ENCODE measurements at regions of chr19 and their contacts with region 1.

Region 1: GRCh38 chr19:2475702-2476450 is at the start of gene GADD45B:
- H3K4me3 ChIP-seq: peak within 1 kb of the TSS; percentile 95
- H3K27ac ChIP-seq: peak within 1 kb of the TSS; percentile 68
- H3K4me1 ChIP-seq: peaks cover 15% of the 10 kb centered on the region
- CTCF ChIP-seq: no peak

Region 2: DNA sequence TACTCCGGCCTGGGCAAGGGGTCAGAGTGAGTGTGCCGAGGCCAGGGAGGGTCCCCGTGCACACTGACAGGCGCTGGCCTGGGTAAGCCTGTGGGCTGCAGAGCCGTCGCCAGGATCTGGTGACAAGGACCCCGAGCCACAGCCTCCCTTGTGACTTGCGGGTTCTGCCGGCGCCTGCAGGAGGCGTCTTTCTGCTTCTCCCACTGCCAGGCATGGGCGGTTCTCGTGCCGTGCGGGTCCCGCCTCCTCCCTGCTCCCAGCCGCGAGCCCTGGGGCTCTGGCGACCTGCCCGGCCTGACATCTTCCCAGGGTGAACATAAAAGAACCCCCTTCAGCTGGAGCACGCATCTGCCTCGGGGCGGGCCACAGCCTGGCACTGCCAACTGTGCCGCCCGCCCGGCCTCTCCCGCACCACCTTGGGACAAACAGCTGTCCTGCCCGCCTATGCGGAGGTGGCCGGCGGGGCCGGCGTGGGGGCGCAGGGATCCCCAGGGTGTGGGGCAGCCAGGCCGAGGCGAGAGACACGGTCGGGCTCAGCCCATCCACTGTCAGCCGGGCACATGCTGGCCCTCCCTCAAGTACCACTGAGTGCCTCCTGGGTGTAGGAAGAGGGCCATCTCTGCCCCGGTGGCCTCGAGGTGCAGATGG is 1887.7 kb before region 1 on chr19:
- CTCF ChIA-PET with region 1: no interaction called
- POLR2A ChIA-PET with region 1: no interaction called
- H3K4me3 ChIP-seq: no peak overlapping the region
- H3K27ac ChIP-seq: peak overlapping the region; percentile 35; the same call in 1 of the 2 replicates
- H3K4me1 ChIP-seq: peaks cover 7% of the 10 kb centered on the region; the same call in 1 of the 2 replicates
- CTCF ChIP-seq: peak; percentile 26; the same call in 1 of the 2 replicates

Region 3: DNA sequence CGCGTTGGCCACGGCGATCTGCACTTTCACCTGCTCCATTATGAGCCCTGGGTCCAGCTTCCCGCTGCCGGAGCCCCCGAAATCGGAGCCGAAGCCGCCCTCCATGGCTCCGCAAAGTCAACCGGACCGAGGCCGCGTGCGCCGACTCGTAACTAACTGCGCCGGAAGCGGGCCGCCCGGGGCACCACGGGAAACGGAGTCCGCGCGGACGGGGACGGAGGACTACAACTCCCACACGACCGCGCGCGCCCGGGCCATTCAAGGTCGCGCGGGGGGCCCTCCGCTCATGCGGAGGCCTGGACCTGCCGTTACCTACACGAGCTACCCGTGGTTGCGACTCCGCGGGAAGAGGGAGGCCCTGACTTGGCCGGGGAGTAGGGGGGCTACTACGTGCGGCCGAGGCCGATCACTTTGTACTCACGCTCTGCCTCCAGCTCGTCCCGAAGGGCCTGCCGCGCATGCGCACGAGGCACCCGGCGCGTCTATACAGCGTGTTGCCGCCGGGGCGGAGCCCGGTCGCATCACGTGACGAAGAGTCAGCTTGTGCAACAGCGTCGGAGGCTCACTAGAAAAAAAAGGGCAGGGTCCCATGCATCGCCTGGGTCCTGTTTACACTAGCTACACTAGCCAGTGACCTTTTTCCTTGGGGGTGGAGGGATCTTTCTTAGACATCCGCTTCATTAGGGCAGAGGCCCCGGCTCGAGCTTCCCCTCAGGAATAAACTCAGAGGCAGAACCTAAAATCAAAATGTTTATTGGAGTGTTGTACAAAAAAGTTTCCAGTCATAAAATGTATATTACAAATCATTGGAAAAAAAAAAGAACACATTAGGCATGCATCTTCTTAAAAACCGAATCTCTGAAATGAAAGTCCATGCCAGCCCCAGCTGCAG is 48.2 kb before region 1 on chr19 and contains the start of gene TIMM13:
- CTCF ChIA-PET with region 1: no interaction called
- POLR2A ChIA-PET with region 1: interaction called, 68 read pairs
- H3K4me3 ChIP-seq: peak within 1 kb of the TSS; percentile 91
- H3K27ac ChIP-seq: peak within 1 kb of the TSS; percentile 86
- H3K4me1 ChIP-seq: 0 out of 2 replicates have a peak, but pooled peaks cover 6% of the 10 kb centered on the region
- CTCF ChIP-seq: no peak

Region 4: GRCh38 chr19:2507109-2507508 is 31.2 kb after region 1 on chr19:
- CTCF ChIA-PET with region 1: no interaction called
- POLR2A ChIA-PET with region 1: interaction called, 74 read pairs
- H3K4me3 ChIP-seq: peak overlapping the region; percentile 13; the same call in 1 of the 2 replicates
- H3K27ac ChIP-seq: no peak overlapping the region; the same call in 1 of the 2 replicates
- H3K4me1 ChIP-seq: peaks cover 3% of the 10 kb centered on the region; the same call in 1 of the 2 replicates
- CTCF ChIP-seq: no peak

Region 5: DNA sequence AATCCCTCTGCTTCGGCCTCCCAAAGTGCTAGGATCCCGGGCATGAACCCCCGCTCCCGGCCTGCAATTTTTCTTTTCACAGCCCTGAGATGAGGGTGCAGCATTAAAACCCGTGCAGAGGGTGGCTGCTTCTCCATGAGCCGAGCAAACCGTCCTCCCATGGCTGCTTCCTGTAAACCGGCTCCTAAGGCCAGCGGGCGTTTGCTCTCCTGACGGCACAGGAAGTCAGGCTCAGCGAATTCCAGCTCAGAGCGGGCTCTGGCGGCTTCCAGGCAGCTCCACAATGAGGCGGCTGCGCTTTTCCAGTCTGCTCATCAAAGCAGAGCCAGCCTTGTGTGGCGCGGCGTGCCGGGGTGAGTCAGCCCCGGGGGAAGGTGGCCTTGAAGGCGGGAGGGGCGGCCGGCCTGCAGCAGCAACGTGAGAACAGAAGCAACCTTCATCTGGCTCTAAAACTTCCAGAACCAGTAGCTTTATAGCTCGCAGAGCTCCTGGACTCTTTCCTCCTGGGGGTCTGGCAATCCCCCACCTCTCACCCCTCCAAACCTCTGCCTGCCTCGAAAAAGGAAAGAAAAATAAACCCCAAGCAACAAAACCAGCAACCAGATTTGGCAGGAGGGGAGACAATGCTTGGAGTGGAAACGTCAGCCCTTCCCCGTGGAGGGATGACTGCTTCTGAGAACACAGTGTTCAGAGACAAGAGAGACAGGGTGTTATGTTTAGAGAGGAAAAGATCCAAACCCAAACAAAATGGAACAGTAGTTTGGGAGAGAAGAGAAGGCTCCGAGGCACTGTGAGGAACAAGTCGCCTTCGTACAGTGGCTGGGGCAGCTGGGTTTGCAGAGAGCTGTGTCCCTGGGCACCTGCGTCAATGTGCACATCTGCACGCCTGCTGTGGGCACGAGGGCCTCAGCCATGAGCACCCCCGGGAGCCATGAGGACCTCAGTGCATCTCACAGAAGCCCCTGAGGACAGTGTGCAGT is 67.9 kb after region 1 on chr19:
- CTCF ChIA-PET with region 1: interaction called, 12 read pairs
- POLR2A ChIA-PET with region 1: interaction called, 374 read pairs
- H3K4me3 ChIP-seq: no peak overlapping the region; the same call in 1 of the 2 replicates
- H3K27ac ChIP-seq: peak overlapping the region; percentile 64
- H3K4me1 ChIP-seq: peaks cover 7% of the 10 kb centered on the region; the same call in 1 of the 2 replicates
- CTCF ChIP-seq: no peak

Region 6: DNA sequence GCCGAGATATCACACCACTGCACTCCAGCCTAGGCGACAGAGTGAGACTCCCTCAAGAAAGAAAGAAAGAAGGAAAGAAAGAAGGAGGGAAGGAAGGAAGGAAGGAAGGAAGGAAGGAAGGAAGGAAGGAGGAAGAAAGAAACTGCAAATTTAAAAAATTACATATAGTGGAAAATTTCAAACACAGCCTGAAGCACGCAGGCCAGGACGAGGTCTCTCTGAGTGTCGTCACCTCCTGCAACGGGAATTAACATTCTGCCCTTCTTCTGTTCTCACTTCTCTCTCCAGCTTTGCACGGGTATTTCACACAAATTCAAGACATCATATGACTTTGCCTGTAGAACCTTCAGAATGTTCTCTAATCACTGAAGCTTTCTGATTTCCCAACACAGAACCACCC is 118.4 kb after region 1 on chr19:
- CTCF ChIA-PET with region 1: no interaction called
- POLR2A ChIA-PET with region 1: interaction called, 105 read pairs
- H3K4me3 ChIP-seq: no peak overlapping the region
- H3K27ac ChIP-seq: no peak overlapping the region
- H3K4me1 ChIP-seq: no peaks in the 10 kb centered on the region
- CTCF ChIP-seq: no peak

Region 7: DNA sequence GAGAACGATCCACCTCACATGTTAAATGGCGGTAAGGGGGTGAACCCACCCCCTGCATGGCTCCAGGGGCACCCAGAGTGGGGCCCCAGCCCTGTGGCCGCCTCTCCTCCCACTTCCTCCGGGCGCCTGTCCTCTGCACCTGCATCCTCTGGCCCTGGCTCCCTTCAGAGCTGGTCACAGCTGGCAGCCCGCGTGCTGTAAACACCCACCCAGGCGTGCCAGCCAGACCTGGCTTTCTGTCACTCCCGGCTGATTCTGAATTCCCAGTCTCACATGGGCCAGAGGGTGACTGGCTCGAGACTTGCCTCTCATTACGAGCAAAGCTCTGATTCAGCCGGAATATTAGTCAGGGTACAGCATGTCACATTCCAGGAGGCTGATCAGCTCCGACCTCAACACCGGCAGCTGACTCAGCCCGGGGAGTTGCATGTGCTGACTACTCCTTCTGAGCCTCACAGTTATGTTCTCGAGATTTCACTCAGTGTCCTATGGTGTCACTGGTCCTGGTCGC is 151.5 kb after region 1 on chr19:
- CTCF ChIA-PET with region 1: no interaction called
- POLR2A ChIA-PET with region 1: interaction called, 23 read pairs
- H3K4me3 ChIP-seq: no peak overlapping the region
- H3K27ac ChIP-seq: no peak overlapping the region
- H3K4me1 ChIP-seq: no peaks in the 10 kb centered on the region
- CTCF ChIP-seq: no peak

Region 8: GRCh38 chr19:2691951-2692350 is 216.1 kb after region 1 on chr19:
- CTCF ChIA-PET with region 1: no interaction called
- POLR2A ChIA-PET with region 1: no interaction called
- H3K4me3 ChIP-seq: no peak overlapping the region
- H3K27ac ChIP-seq: no peak overlapping the region
- H3K4me1 ChIP-seq: no peaks in the 10 kb centered on the region
- CTCF ChIP-seq: no peak

Measured in HEK293 (cell line).